A673 (cell line): ENCODE measurements at regions of chr5 and their contacts with region 1.

Region 1: GRCh38 chr5:82351754-82352145 is 73.6 kb upstream of the RPS23 start:
- DNase-seq: peak; percentile 73
- H3K4me3 ChIP-seq: no peak overlapping the region
- H3K27ac ChIP-seq: no peak overlapping the region
- H3K4me1 ChIP-seq: no peaks in the 10 kb centered on the region
- H3K27me3 ChIP-seq: no peaks in the 10 kb centered on the region
- CTCF ChIP-seq: peak; percentile 73

Region 2: DNA sequence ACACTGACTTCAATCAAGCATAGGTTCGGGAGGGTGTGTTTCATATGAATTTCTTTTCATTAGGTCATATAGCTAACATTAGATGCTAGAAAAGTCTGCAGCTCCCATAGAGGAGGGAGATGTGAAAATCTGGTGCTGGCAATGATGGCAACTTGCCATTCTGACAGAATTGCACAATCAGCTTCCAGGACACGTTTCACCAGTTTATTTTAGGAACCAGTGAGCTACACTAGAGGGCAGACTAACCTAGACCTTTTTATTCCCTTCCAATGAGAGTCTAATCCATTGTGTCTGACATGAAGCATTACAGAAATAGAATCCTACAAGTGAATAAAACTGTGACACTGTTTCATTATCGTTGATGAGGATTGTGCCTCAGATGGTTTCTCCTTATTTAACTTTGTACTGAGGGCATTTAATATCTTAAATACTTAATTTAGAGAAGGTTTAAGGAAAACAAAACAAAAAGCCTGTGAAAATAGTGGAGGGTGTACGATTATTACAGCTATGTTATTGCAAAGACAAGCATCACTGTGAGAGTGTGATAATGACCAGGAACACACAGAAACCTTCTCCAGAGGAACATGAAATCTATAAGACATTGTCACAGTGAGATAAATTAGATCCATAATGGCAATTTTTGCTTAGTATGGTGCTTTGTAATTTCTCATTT is 289.7 kb after region 1 on chr5:
- CTCF ChIA-PET with region 1: no interaction called
- POLR2A ChIA-PET with region 1: no interaction called
- intact Hi-C with region 1: loop called (anchors 2 kb)
- DNase-seq: peak; percentile 91
- H3K4me3 ChIP-seq: no peak overlapping the region
- H3K27ac ChIP-seq: no peak overlapping the region
- H3K4me1 ChIP-seq: peaks cover 22% of the 10 kb centered on the region
- H3K27me3 ChIP-seq: no peaks in the 10 kb centered on the region
- CTCF ChIP-seq: peak; percentile 77

Region 3: DNA sequence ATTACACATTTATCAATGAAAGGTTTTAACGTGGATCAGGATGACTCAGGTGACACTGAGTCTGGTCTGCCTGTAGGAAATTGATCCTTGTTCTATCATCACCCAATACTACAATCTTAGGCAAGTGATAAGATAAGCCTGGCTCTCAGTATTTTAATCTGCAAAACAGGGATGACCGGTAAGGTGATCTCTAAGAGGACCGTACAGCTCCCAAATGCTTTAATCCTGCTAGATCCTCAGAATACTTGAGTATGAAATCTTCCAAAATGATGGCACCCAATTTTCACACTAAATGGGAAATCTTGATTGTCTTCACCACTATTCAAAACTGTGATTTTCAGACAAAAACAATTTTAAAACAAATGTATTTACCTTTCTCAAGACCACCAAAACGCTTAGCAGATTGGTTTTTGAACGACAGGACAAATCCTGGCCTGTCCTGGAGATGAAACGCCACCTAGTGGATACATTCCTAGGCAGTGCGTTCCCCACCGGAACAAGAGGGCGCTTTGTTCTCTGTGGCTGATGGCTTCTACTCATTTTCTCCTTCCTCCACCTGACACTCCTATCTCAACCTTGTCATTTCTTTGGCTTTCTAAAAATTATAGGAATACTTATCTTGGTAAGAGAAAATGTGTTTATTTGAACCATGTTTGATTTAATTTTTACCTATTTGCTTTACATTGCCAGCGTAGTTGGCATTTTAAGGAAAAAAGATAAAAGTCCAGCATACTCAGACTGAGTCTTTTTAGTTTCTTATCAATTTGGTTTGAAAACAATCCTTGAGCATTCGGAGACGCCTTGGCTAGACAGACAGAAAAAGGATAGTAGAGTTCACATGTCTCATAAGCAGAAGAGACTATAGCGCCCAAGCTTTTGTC is 1078.6 kb after region 1 on chr5:
- CTCF ChIA-PET with region 1: no interaction called
- POLR2A ChIA-PET with region 1: no interaction called
- intact Hi-C with region 1: loop called (anchors 2 kb)
- DNase-seq: peak; percentile 69
- H3K4me3 ChIP-seq: no peak overlapping the region
- H3K27ac ChIP-seq: no peak overlapping the region
- H3K4me1 ChIP-seq: no peaks in the 10 kb centered on the region
- H3K27me3 ChIP-seq: no peaks in the 10 kb centered on the region
- CTCF ChIP-seq: peak; percentile 95

Region 4: DNA sequence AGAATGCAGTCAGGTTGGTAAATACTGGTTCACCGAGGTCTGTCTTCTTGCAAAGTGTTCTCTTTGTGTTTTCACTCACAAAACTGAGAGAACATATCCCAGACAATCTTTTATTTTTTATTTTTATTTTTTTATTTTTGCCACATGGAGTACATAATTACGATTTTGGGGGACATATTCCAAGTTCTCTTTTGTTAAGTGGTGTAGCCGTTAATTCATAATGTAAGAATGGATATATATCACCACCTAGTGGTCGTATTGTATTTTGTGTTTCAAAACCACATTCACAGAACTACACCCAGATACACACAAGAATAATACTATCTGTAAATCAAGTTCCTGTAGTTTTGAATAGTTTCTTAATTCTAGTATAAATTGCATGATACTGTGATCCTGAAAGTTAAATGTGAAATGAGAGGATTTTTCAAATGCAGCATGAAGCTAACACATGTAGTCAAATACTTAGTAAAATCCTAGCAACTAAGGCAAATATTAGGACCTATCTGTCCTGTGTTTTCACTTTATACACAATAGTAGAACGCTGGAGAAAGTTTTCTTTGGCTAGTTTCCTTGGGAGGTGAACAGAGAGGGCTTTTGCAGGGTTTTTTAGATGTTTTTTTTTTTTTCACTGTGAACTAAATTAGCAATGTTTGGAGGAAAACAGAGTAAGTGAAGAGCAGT is 1212.5 kb after region 1 on chr5:
- CTCF ChIA-PET with region 1: no interaction called
- POLR2A ChIA-PET with region 1: no interaction called
- intact Hi-C with region 1: loop called (anchors 1 kb)
- DNase-seq: peak; percentile 52
- H3K4me3 ChIP-seq: no peak overlapping the region
- H3K27ac ChIP-seq: no peak overlapping the region
- H3K4me1 ChIP-seq: no peaks in the 10 kb centered on the region
- H3K27me3 ChIP-seq: peaks cover 4% of the 10 kb centered on the region
- CTCF ChIP-seq: peak; percentile 68